Cardiac septum (tissue), 1 donor: ENCODE measurements at regions of chr7 and their contacts with region 1.

Region 1: GRCh38 chr7:113405296-113406056 is 287.1 kb upstream of the SMIM30 start:
- DNase-seq: no peak

Region 2: DNA sequence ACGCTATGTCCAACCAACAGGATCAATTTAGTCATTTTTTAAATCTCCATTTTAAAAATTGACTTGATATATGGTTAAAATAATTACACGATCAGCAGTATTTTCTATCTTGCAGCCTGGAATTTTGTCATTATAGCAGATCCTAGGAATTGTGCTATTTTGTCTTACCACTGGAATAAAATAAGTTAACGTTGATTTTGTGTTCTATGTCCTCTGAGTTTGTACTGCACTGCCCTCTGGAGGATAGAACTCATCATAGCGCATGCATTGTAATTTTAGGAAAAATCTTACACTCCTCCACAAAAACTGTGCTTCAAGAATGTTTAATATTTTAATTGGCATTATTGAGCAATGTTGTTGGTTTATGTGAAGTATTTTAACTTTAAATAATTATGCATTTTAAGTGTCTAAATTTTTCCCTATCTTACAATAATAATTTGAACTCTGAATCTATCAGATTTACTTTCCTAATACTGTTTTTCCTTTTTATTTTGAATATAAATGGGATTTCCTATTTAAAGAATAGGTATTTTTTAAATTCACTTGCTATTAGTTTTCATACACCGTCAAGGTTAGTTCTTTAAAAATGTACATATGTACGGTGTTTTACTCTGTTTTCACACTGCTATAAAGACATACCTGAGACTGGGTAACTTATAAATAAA is 293.2 kb after region 1 on chr7:
- intact Hi-C with region 1: loop called (anchors 5 kb)
- DNase-seq: no peak